Activated CD8-positive, alpha-beta T cell treated with anti-CD3 and anti-CD28 coated beads for 36 hours (primary cell): ENCODE measurements at regions of chr6 and their contacts with region 1.

Region 1: GRCh38 chr6:155327326-155328073 is 13.2 kb upstream of the TFB1M start:
- DNase-seq: peak; percentile 67
- ATAC-seq: peak; percentile 76
- H3K4me3 Mint-ChIP-seq: no peak overlapping the region
- H3K27ac Mint-ChIP-seq: peak overlapping the region; percentile 68
- H3K4me1 Mint-ChIP-seq: peaks cover 31% of the 10 kb centered on the region
- H3K27me3 Mint-ChIP-seq: no peaks in the 10 kb centered on the region
- CTCF ChIP-seq: peak; percentile 90

Region 2: GRCh38 chr6:155301867-155302266 is 25.6 kb before region 1 on chr6:
- CTCF ChIA-PET with region 1: no interaction called
- POLR2A ChIA-PET with region 1: no interaction called
- intact Hi-C with region 1: no loop called
- DNase-seq: no peak
- ATAC-seq: no peak
- H3K4me3 Mint-ChIP-seq: no peak overlapping the region
- H3K27ac Mint-ChIP-seq: no peak overlapping the region
- H3K4me1 Mint-ChIP-seq: peaks cover 14% of the 10 kb centered on the region
- H3K27me3 Mint-ChIP-seq: no peaks in the 10 kb centered on the region
- CTCF ChIP-seq: no peak

Region 3: DNA sequence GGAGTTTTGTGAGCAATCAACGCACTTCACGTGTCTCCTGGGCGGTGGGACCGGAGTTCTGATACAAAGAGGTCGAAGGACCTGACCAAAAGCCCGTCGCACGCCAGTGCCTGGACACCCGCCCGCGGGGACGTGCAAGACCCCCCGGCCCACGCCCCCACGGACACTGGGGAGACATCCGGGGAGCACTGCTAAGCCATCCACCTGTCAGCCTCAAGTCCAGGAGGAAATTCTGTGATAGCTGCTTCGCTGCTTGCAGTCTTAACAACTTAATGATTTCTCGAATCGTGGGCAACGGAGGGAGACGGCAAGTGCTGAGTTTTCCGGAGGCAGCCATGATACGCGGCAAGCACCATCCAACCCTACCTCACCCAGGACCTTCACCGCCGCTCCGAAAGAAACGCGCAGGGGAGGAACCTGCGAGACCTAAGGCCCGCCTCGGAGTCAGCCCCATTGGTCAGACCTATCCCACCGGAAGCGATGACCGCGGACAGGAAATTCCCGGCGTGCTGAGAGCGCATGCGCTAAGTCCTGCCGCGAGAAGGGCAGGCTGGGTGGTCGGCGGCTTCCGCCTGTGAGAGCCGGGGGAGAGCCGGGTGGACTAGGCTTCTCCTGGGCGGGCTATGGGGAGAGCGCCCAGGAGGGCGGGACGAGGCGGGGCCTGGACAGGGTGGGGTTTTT is 13.3 kb before region 1 on chr6 and contains the start of gene TFB1M:
- CTCF ChIA-PET with region 1: interaction called, 38 read pairs
- POLR2A ChIA-PET with region 1: interaction called, 4 read pairs
- intact Hi-C with region 1: no loop called
- DNase-seq: peak; percentile 99
- ATAC-seq: peak; percentile 96
- H3K4me3 Mint-ChIP-seq: peak within 1 kb of the TSS; percentile 98
- H3K27ac Mint-ChIP-seq: peak within 1 kb of the TSS; percentile 99
- H3K4me1 Mint-ChIP-seq: peaks cover 38% of the 10 kb centered on the region
- H3K27me3 Mint-ChIP-seq: no peaks in the 10 kb centered on the region
- CTCF ChIP-seq: no peak
- total RNA-seq, gene TFB1M: 70.9 to 76.6 TPM

Region 4: DNA sequence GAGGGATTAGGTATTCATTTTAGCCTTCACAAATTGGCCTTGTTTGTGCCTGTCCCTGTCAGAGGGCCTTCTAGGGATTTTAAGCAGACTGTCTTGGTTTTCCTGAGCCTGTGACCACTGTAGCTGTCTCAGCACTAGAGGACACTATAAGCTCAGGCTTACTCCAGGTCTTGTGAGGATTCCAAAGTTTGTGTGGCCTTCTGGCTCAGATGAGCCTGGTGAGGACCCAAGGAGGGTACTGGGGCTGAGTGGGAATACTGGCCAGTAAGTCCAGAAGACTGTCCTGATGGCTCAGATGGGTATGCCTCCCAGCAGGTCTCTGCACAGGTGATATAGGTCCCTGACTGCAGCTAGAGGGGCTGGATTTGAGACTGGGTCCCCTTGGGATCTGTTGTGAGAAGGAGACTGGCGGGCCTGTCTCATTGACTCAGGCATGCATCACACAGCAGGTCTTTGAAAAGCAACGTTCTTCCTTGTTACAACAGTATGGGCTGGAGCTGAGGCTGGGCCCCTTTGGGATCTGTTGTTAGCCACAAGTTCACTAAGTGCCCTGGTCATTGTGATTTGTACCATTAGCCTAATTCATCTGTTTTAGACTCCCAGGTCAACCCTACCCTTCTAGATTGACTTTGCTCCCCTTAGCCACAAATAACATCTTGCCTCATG is 13.1 kb after region 1 on chr6:
- CTCF ChIA-PET with region 1: interaction called, 17 read pairs
- POLR2A ChIA-PET with region 1: no interaction called
- intact Hi-C with region 1: no loop called
- DNase-seq: no peak
- ATAC-seq: no peak
- H3K4me3 Mint-ChIP-seq: no peak overlapping the region
- H3K27ac Mint-ChIP-seq: no peak overlapping the region
- H3K4me1 Mint-ChIP-seq: peaks cover 25% of the 10 kb centered on the region
- H3K27me3 Mint-ChIP-seq: no peaks in the 10 kb centered on the region
- CTCF ChIP-seq: no peak

Region 5: GRCh38 chr6:155530219-155530834 is 202.8 kb after region 1 on chr6:
- CTCF ChIA-PET with region 1: interaction called, 17 read pairs
- POLR2A ChIA-PET with region 1: no interaction called
- intact Hi-C with region 1: loop called (anchors 1 kb)
- DNase-seq: peak; percentile 35
- ATAC-seq: peak; percentile 69
- H3K4me3 Mint-ChIP-seq: no peak overlapping the region
- H3K27ac Mint-ChIP-seq: no peak overlapping the region
- H3K4me1 Mint-ChIP-seq: peaks cover 21% of the 10 kb centered on the region
- H3K27me3 Mint-ChIP-seq: peaks cover under 1% of the 10 kb centered on the region
- CTCF ChIP-seq: peak; percentile 74